ENCODE measurements at regions of chr14 and their contacts with region 1.

Region 1: DNA sequence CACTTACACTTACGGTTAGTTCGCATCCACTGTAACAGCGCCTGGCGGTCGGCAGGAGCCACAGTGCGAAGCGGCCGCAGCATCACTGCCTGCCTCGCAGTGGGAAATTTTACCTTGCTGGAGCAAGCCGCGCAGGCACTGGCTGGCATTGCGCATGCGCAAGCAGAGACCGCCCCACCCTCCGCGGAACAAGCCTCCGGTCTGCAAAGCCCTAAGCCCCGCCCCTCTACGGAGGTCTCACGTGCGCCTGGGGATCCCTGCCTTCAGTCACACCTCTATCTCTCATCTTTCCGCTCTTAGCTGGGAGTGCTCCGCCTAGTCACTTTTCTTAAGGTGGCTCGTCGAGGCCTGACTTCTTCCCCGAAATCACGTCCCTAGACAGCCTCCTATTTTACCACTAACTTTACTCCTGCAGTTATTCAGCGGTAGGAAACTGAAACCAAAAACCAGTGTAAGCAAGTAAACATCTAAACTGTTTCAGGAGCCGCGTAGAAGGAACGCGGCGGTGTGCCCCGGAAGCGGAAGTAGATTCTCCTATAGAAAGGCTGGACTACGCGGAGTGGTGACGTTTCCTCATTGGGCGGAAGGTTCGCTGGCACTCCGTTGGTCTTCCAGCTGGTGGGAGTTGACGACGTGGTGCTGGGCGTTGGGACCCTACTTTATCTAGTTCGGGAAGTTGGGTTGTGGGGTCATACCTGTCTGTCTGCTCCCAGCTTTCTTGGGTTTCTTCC is at the start of gene SRP54:
- DNase-seq: peak; percentile 95
- ATAC-seq: peak; percentile 88
- H3K4me3 ChIP-seq: peak within 1 kb of the TSS; percentile 89
- H3K27ac ChIP-seq: peak within 1 kb of the TSS; percentile 95
- H3K4me1 ChIP-seq: no peaks in the 10 kb centered on the region
- H3K27me3 ChIP-seq: no peaks in the 10 kb centered on the region
- CTCF ChIP-seq: peak; percentile 11 to 20 (median 15); a peak in 2 of 6 replicates
- EP300 ChIP-seq: peak in 1 of 2 experiments; percentile 44; a peak in 2 of 4 replicates
- POLR2A ChIP-seq: peak; percentile 87
- RAD21 ChIP-seq: no peak
- polyA plus RNA-seq, gene SRP54: 71.3 to 73.3 TPM

Region 2: DNA sequence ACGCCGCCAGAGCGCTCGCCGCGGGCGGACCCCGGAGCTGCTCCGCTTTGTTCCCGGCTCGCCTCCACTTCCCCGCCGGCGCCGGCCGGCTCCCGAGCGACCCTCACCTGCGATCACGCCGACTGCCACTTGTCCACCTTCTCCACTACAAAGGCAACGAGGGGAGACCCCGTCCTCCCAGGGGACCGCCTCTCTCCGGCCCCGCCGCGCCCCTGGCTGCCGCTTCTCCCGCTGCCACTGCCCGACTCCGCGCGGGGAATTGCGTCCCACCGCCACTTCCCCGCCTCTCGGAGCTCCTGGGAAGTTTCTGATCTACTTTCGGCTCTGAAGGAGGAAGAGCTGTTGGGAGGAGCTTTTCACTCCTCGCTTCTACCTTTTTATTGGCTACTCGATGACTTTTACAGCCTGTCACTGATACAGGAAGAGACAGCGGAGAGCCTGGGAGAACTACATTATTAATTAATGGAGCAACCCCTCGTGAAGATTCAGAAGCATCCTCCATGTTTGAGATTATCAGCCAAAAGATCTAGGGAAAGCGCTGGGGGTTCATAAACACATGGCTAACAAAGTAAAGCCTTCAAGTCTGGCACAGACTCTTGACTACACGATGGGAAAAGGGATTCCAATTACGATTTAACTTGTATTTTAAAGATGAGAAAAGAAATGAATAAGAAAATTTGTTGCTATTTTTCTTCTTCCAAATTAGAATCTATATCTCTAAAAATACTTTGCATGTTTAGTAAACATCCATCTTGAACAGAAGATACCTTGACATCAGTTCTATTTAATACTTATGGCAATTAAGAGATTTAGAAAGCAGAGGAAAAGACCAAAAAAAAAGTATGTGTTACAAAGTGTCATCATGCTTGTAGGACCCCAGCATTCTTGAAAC is 107.3 kb before region 1 on chr14 and contains the start of gene BAZ1A:
- CTCF ChIA-PET with region 1: interaction called, 3 read pairs
- POLR2A ChIA-PET with region 1: interaction called, 33 read pairs
- RAD21 ChIA-PET with region 1: interaction called, 12 read pairs
- SMC1A ChIA-PET with region 1: interaction called, 8 read pairs
- in situ Hi-C with region 1: loop called (anchors 5 kb)
- intact Hi-C with region 1: loop called (anchors 2 kb)
- DNase-seq: peak; percentile 41
- ATAC-seq: peak; percentile 39
- H3K4me3 ChIP-seq: peak within 1 kb of the TSS; percentile 88
- H3K27ac ChIP-seq: peak within 1 kb of the TSS; percentile 98
- H3K4me1 ChIP-seq: no peaks in the 10 kb centered on the region; the same call in 1 of the 2 replicates
- H3K27me3 ChIP-seq: no peaks in the 10 kb centered on the region
- CTCF ChIP-seq: no peak
- EP300 ChIP-seq: no peak
- POLR2A ChIP-seq: peak; percentile 47
- RAD21 ChIP-seq: no peak
- polyA plus RNA-seq, gene BAZ1A: 38.5 to 39.9 TPM

Region 3: DNA sequence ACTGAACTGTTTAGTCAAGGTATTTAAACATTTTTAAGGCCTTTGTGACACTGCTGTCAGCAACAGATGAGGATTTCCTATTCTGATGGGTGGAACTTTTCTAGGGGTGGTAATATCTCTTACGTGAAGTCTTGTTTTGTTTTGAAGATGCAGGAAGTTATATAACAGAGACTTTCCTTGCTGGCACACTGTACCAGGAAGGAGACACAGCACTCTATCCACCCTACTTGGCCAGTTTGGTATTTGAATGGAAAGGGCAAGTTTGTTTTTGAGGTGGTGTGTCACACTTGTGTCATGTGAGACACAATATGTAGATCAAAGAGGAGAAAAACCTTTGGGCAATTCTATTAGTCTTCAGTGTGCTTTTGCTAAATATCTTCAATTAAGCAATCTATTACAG is 51.4 kb before region 1 on chr14:
- CTCF ChIA-PET with region 1: interaction called, 3 read pairs
- POLR2A ChIA-PET with region 1: interaction called, 10 read pairs
- RAD21 ChIA-PET with region 1: interaction called, 7 read pairs
- SMC1A ChIA-PET with region 1: interaction called, 5 read pairs
- in situ Hi-C with region 1: no loop called
- intact Hi-C with region 1: no loop called
- DNase-seq: peak; percentile 9
- ATAC-seq: peak; percentile 71
- H3K4me3 ChIP-seq: no peak overlapping the region
- H3K27ac ChIP-seq: peak overlapping the region; percentile 68
- H3K4me1 ChIP-seq: peaks cover 3% of the 10 kb centered on the region; the same call in 1 of the 2 replicates
- H3K27me3 ChIP-seq: no peaks in the 10 kb centered on the region
- CTCF ChIP-seq: no peak
- EP300 ChIP-seq: no peak
- POLR2A ChIP-seq: no peak
- RAD21 ChIP-seq: no peak

Region 4: DNA sequence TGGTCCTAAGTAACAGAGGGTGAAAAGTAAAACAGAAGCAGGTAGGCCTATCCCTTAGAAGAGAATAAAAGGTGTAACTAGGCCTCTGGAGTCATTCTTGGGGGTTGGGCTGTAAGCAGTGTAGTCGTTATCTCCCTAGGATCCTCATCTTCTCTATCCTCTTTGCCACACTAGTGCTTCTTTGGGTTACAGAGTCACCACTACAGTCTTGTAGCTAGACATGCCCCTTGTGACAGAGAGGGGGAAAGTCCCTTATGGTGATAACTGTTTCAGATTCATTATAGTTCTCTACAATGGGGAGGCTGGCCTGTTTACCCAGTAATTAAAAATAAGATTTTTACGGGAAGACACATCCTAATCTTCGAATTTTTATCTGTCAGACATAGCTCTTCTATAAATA is 16.2 kb before region 1 on chr14:
- CTCF ChIA-PET with region 1: interaction called, 8 read pairs
- POLR2A ChIA-PET with region 1: interaction called, 12 read pairs
- RAD21 ChIA-PET with region 1: interaction called, 5 read pairs
- SMC1A ChIA-PET with region 1: interaction called, 14 read pairs
- in situ Hi-C with region 1: no loop called
- intact Hi-C with region 1: no loop called
- DNase-seq: no peak
- ATAC-seq: peak; percentile 99
- H3K4me3 ChIP-seq: no peak overlapping the region
- H3K27ac ChIP-seq: peak overlapping the region; percentile 6; the same call in 1 of the 2 replicates
- H3K4me1 ChIP-seq: no peaks in the 10 kb centered on the region; the same call in 1 of the 2 replicates
- H3K27me3 ChIP-seq: no peaks in the 10 kb centered on the region
- CTCF ChIP-seq: no peak
- EP300 ChIP-seq: no peak
- POLR2A ChIP-seq: no peak
- RAD21 ChIP-seq: no peak

Region 5: DNA sequence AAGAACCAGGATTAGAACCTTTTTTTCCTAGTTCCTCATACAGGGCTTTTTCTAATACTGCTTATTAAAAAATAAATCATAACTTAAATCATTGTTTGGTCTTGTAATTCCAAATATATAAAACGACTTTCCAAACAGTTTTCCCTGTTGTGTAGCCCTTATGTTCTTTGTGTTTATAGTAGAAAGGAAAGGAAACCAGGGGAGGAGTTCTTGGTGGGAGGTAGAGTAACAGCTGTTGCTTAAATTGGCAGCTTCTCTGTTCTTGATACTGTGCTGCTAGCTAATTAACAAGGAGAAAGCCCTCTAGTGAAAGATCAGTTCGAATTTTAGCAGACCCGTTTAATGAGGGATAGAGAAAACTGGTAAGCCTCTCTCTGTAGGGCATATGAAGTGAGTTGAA is 15.2 kb after region 1 on chr14:
- CTCF ChIA-PET with region 1: interaction called, 5 read pairs
- POLR2A ChIA-PET with region 1: interaction called, 10 read pairs
- RAD21 ChIA-PET with region 1: interaction called, 5 read pairs
- SMC1A ChIA-PET with region 1: interaction called, 4 read pairs
- in situ Hi-C with region 1: no loop called
- intact Hi-C with region 1: no loop called
- DNase-seq: no peak
- ATAC-seq: no peak
- H3K4me3 ChIP-seq: no peak overlapping the region
- H3K27ac ChIP-seq: no peak overlapping the region
- H3K4me1 ChIP-seq: peaks cover 5% of the 10 kb centered on the region
- H3K27me3 ChIP-seq: no peaks in the 10 kb centered on the region
- CTCF ChIP-seq: no peak
- EP300 ChIP-seq: no peak
- POLR2A ChIP-seq: no peak
- RAD21 ChIP-seq: no peak

Region 6: DNA sequence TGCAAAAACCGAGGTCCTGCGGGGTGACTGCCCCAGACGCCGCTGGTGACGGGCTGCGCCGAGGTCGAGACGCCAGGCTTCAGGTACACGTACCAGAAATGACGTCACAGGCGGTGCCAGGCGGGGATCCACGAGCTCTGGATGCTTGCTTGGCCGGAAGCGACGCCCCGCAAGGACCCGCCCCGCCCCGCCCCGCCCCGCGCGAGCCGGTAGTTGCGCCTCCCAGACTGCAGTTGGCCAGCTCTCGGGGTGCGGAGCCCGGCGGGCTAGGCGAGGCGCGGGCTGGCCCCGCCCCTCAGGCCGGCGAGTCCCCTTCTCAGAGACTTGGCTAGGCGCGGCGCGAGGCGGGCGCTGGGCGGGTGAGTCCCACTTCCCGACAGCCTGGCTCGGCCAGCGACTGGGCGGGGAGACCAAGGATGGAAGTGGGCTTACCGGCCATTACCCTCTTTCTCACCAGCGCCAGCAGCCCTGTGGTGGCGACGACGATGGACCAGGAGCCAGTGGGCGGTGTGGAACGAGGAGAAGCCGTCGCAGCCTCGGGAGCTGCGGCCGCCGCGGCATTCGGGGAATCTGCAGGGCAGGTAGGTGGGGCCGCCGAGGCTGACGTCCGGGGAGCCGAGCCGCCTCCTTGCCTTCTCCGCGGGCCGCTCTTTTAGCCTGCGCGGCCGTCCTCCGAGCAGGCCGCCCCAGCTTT is 63.6 kb after region 1 on chr14 and contains the start of gene FAM177A1:
- CTCF ChIA-PET with region 1: interaction called, 20 read pairs
- POLR2A ChIA-PET with region 1: interaction called, 37 read pairs
- RAD21 ChIA-PET with region 1: interaction called, 29 read pairs
- SMC1A ChIA-PET with region 1: interaction called, 7 read pairs
- in situ Hi-C with region 1: no loop called
- intact Hi-C with region 1: loop called (anchors 2 kb)
- DNase-seq: peak; percentile 78
- ATAC-seq: peak; percentile 98
- H3K4me3 ChIP-seq: peak within 1 kb of the TSS; percentile 87
- H3K27ac ChIP-seq: peak within 1 kb of the TSS; percentile 67
- H3K4me1 ChIP-seq: peaks cover 6% of the 10 kb centered on the region; the same call in 1 of the 2 replicates
- H3K27me3 ChIP-seq: no peaks in the 10 kb centered on the region
- CTCF ChIP-seq: no peak
- EP300 ChIP-seq: no peak
- POLR2A ChIP-seq: peak; percentile 95
- RAD21 ChIP-seq: no peak
- polyA plus RNA-seq, gene FAM177A1: 5.3 to 11.0 TPM

Region 7: DNA sequence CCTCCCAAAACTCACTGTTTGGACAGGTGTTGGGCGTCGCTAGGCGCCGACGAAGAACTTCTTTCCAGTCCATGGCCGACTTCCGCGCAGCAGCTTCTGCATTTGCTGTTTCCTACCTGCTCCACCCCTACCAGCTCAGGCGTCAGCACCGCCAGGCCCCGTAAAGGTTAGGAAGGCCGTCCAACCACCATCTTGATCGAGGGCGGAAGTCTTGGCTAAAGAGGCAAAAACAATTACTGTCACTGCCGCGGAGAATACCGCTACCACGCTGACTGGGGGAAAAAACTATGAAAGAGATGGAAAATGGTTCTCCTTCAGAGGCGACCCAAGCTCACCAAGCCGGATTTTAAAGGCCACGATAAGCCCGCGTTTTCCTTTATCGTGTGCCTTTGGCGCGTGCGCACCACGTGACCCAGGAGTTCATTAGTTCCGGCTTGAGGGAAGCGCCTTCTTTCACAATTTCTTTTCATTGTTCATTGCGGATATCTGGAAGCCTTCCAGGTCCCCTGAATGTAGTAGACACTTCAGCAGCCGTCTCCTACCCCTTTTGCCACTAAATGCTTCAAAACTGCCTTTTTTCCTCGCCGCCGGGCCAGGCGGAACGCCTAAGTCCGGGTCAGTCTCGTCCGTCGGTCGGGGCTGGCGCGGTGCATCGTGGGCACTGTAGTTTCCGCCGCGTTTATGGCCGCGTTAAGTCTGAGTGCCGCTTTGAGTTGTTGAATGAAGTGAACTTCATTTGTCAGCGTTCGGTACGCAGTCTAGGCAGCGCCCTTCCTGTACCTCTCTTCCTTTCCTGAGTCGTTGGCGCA is 139.5 kb after region 1 on chr14 and contains the starts of genes PPP2R3C and PRORP:
- CTCF ChIA-PET with region 1: interaction called, 5 read pairs
- POLR2A ChIA-PET with region 1: interaction called, 9 read pairs
- RAD21 ChIA-PET with region 1: interaction called, 6 read pairs
- SMC1A ChIA-PET with region 1: interaction called, 7 read pairs
- in situ Hi-C with region 1: no loop called
- intact Hi-C with region 1: loop called (anchors 1 kb)
- DNase-seq: peak; percentile 94
- ATAC-seq: peak; percentile 92
- H3K4me3 ChIP-seq: peak within 1 kb of the TSS; percentile 83
- H3K27ac ChIP-seq: peak within 1 kb of the TSS; percentile 99
- H3K4me1 ChIP-seq: 0 out of 2 replicates have a peak, but pooled peaks cover 2% of the 10 kb centered on the region
- H3K27me3 ChIP-seq: no peaks in the 10 kb centered on the region
- CTCF ChIP-seq: no peak
- EP300 ChIP-seq: no peak; a peak in 1 of 4 replicates
- POLR2A ChIP-seq: peak; percentile 75
- RAD21 ChIP-seq: no peak
- polyA plus RNA-seq, gene PPP2R3C: 77.8 to 80.5 TPM
- polyA plus RNA-seq, gene PRORP: 45.2 TPM